Activated CD4-positive, alpha-beta T cell treated with anti-CD3 and anti-CD28 coated beads, Interleukin-2, amount 10 ng/mL, durations not matched to agents 24 days and 14 days (primary cell): ENCODE measurements at regions of chr12 and their contacts with region 1.

Region 1: DNA sequence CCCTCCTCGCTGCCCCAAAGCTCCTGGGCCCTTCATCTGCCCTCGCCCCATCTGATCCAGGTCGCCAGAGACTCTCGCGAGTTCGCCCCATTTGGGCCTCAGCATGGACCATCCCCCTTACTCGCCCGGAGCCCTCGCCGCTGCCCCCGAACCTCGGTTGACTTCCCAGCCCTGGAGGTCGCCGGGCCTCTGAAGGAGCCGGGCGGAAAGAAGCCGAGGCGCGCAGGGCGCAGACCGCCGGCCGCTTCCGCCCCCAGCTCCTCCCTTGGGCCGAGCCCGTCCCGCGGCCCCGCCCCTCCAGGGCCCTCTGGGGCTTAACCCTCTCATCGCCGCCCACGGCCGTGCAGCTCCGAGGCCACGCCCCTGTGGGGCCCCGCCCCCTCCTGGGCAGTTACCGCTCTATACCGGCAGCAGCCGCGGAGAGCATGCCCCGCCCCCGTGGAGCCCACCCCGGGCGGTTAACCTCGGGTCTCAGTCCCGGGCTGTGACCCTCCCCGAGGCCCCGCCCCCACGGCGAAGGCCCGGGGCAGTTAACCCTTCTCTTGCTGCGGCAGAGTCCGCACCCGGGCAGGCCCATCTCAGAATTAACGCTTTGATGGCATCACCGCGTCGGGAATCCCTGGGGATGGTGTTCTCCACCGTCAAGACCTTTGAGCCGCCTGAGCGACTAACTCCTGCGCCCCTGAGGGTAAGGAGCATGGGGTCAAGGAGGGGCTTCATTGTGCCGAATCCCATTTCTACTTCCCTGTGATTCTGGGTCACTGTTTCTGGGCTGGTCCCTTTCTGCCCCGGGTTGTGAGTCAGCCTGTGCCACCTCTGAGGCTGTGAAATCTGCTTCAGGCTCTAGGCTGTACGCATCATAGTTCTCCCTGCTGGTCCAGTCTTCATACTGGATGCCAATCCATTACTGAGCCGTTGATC is at the start of gene SPSB2:
- DNase-seq: peak; percentile 100
- H3K4me3 Mint-ChIP-seq: peak within 1 kb of the TSS; percentile 89
- H3K27ac Mint-ChIP-seq: peak within 1 kb of the TSS; percentile 88
- H3K4me1 Mint-ChIP-seq: peaks cover 50% of the 10 kb centered on the region
- H3K27me3 Mint-ChIP-seq: no peaks in the 10 kb centered on the region
- total RNA-seq, gene SPSB2: 3.4 TPM in 2 replicates

Region 2: GRCh38 chr12:6607751-6608591 is 265.4 kb before region 1 on chr12:
- intact Hi-C with region 1: loop called (anchors 5 kb)
- DNase-seq: peak; percentile 89
- H3K4me3 Mint-ChIP-seq: no peak overlapping the region
- H3K27ac Mint-ChIP-seq: no peak overlapping the region
- H3K4me1 Mint-ChIP-seq: peaks cover 45% of the 10 kb centered on the region
- H3K27me3 Mint-ChIP-seq: no peaks in the 10 kb centered on the region

Region 3: DNA sequence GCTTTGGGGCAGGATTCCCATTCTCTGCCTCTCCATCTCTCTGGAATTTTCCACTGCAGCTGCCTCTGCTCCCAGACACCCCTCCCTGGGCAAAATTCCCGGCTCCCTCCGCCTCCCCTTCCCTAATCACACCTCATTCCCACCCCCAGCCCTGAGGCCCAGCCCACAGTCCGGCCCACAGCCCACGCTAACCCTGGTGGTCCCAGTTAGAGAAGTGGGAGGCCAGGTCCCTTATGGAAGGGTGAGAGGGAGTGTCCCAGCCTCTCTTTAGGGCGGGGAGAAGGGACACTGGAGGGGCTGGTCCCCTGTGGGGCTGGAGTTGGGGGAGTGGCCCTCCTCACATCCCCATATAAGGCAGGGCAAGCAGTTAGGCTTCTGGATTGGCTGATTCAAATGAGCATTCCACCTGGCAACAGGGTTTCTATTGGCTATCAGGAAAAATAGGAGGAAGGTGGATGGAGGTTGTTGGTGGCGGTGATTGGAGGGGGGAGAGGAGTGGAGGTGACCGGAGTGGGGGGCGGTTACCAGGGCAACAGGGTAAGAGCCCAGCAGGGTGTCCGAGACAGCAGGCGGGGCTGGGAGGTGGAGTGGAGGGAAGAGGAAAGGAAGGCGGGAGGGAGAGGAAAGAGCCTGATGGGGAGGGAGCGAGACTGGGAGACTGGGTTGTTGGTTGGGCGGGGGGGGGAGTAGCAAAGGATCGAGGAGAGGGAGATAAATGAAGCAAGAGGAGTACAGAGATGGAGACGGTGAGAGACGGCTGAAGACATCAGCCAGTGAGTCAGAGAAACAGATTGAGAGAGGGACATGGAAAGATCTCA is 109.1 kb before region 1 on chr12:
- intact Hi-C with region 1: loop called (anchors 2 kb)
- DNase-seq: peak; percentile 91
- H3K4me3 Mint-ChIP-seq: peak overlapping the region; percentile 75
- H3K27ac Mint-ChIP-seq: peak overlapping the region; percentile 70
- H3K4me1 Mint-ChIP-seq: peaks cover 36% of the 10 kb centered on the region
- H3K27me3 Mint-ChIP-seq: peaks cover 7% of the 10 kb centered on the region

Region 4: GRCh38 chr12:6890789-6891645 is 17.7 kb after region 1 on chr12:
- intact Hi-C with region 1: loop called (anchors 1 kb)
- DNase-seq: peak; percentile 100
- H3K4me3 Mint-ChIP-seq: peak overlapping the region; percentile 83
- H3K27ac Mint-ChIP-seq: peak overlapping the region; percentile 97
- H3K4me1 Mint-ChIP-seq: peaks cover 21% of the 10 kb centered on the region
- H3K27me3 Mint-ChIP-seq: no peaks in the 10 kb centered on the region

Region 5: GRCh38 chr12:6914246-6914946 is 41.0 kb after region 1 on chr12 and contains the start of gene ENO2:
- intact Hi-C with region 1: loop called (anchors 2 kb)
- DNase-seq: peak; percentile 94
- H3K4me3 Mint-ChIP-seq: peak within 1 kb of the TSS; percentile 99
- H3K27ac Mint-ChIP-seq: peak within 1 kb of the TSS; percentile 94
- H3K4me1 Mint-ChIP-seq: peaks cover 40% of the 10 kb centered on the region
- H3K27me3 Mint-ChIP-seq: no peaks in the 10 kb centered on the region
- total RNA-seq, gene ENO2: 202 and 206 TPM in 2 replicates

Region 6: DNA sequence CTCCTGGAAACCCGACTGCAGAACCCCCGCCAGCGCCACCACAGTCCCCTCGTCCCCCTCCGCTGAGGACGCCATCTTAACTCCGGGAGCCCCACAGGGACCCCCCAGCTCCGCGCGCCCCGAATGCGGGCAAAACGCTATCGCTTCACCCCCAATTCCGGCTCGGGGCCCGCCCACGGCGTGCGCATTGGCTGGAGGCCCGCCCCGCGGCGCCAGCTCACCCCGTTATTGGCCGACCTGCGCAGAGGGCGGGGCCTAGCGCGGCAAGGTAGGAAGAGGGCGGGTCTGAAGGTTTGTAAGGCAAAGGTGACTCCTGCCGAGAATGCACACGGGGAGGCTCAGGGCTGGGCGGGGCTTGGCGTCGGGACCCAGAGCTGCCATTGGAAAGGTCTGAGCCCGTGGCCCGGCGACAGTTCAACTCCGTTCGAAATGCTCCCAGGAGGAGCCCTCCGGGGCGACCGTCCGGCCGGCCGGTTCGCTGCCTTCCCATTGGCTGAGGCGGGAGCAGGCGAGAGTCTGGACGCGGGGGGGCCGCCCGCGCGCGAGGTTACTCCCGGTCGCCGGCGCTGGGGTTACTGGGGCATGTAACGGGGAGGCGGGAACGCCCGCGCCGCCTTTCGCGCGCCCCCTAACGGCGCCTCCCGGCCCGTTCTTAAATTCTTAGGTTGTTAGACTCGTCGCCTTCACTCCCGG is 145.1 kb after region 1 on chr12 and contains the start of gene LPCAT3:
- intact Hi-C with region 1: loop called (anchors 5 kb)
- DNase-seq: peak; percentile 100
- H3K4me3 Mint-ChIP-seq: peak within 1 kb of the TSS; percentile 90
- H3K27ac Mint-ChIP-seq: peak within 1 kb of the TSS; percentile 91
- H3K4me1 Mint-ChIP-seq: peaks cover 28% of the 10 kb centered on the region
- H3K27me3 Mint-ChIP-seq: no peaks in the 10 kb centered on the region
- total RNA-seq, gene LPCAT3: 29.2 and 29.5 TPM in 2 replicates